ENCODE measurements at regions of chr11 and their contacts with region 1.

Region 1: GRCh38 chr11:18526521-18527296 is at the start of gene TSG101:
- DNase-seq: peak; percentile 95
- H3K4me3 Mint-ChIP-seq: peak within 1 kb of the TSS; percentile 100
- H3K27ac Mint-ChIP-seq: peak within 1 kb of the TSS; percentile 100
- H3K4me1 Mint-ChIP-seq: peaks cover 47% of the 10 kb centered on the region
- H3K27me3 Mint-ChIP-seq: no peaks in the 10 kb centered on the region
- total RNA-seq, gene TSG101: 41.7 to 45.6 TPM

Region 2: DNA sequence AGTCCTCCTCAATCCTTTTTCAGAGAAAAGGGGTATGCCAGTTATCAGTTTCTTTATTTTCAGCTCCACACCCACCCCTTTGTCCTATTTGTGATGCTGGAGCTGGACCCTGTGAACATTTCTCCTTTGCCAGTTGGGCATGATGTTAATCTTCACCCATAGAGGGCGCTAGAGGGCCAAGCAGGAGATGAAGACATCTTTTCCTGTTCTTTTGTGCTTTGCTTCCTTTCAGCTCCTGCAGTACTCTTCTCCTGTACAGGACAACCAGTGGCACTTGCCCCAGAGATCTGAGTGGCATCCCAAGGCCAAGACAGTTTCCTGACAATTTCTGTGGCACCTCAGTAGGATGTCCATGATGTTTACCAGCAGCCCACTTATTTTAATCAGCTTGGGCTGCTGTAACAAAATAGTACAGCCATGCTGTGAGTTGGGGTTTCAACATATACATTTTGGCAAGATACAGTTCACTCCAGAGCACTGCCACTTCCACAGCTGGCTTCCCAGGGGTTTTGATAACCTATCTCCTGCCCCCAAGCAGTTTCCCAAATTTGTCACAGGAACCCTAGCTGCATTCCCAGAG is 282.8 kb before region 1 on chr11:
- CTCF ChIA-PET with region 1: interaction called, 8 read pairs
- POLR2A ChIA-PET with region 1: no interaction called
- intact Hi-C with region 1: loop called (anchors 1 kb)
- DNase-seq: peak; percentile 73
- H3K4me3 Mint-ChIP-seq: no peak overlapping the region
- H3K27ac Mint-ChIP-seq: no peak overlapping the region
- H3K4me1 Mint-ChIP-seq: peaks cover 16% of the 10 kb centered on the region
- H3K27me3 Mint-ChIP-seq: peaks cover 7% of the 10 kb centered on the region

Region 3: DNA sequence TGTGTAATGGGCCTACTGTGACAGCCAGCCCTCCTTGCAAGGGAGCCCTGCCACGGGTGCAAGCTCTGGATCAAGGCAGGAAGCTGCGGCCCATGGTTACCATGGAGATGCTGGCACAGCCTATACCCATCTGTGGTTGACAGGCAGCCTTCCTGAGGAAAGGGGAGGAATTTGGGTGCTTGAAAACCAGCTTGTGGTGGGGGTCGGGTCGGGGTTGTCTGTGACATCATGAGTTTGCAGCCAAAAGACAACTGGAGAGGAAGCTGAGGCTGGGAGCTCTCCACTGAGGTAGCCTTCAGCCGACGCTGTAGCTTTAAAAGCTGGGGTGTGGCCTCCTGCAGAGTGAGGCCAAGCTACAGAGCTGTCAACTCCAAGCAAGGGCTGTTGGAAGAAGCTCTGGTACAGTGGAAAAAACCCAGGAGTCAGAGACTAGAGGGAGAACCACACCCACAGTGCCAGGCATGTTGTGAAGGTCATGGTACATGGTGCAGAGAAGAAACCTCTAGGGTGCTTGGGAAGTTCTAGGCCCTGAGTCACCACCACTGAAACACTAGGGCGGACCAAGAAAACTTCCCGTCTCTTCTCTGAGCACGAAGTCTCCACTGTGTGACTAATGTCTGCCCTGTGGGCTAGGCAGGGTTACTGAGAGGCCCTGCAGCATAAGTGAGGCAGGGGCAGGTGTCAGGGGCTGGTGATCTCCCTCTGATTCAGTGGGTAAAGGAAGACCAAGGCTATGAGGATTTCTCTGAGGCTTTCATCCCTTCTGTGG is 143.1 kb before region 1 on chr11:
- CTCF ChIA-PET with region 1: no interaction called
- POLR2A ChIA-PET with region 1: interaction called, 15 read pairs
- intact Hi-C with region 1: no loop called
- DNase-seq: peak; percentile 92
- H3K4me3 Mint-ChIP-seq: peak overlapping the region; percentile 59
- H3K27ac Mint-ChIP-seq: peak overlapping the region; percentile 99
- H3K4me1 Mint-ChIP-seq: peaks cover 43% of the 10 kb centered on the region
- H3K27me3 Mint-ChIP-seq: no peaks in the 10 kb centered on the region

Region 4: DNA sequence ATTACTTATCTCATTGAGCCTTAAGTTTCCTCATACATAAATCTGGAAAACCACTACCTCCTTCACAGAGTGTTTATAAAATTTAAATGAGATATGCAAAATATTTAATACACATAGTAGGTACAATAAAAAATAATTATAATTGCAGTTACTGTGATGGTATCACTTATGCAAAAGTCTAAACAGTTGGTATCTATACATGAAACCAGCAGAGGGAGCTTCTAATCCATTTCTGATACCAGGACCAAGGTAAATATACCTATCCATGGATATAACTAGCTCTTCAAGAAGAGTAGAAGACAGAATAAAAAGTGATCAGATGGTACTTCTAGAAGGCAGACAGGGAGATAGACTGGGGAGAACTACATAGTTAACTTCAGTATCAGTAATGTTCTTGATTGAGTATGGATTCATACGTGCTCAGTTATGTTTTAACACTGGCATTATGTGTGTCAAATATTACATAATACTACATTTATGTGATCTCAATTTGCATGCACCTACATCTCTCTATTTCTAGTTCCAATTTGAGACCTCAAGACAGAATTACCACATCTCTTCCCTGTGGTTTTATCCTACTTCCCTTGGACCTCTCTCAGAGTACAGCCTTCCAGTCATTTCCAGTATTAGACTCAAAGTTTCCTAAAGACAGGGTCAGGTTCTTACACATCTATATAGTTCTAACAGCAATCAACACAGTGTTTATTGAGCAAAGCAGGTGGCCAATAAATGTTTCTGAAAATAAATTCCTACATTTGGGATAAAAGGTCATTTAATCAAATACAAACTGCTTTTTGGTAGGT is 13.7 kb after region 1 on chr11:
- CTCF ChIA-PET with region 1: interaction called, 15 read pairs
- POLR2A ChIA-PET with region 1: no interaction called
- intact Hi-C with region 1: no loop called
- DNase-seq: no peak
- H3K4me3 Mint-ChIP-seq: no peak overlapping the region
- H3K27ac Mint-ChIP-seq: no peak overlapping the region
- H3K4me1 Mint-ChIP-seq: peaks cover 5% of the 10 kb centered on the region
- H3K27me3 Mint-ChIP-seq: no peaks in the 10 kb centered on the region

Region 5: GRCh38 chr11:18615628-18616392 is 89.1 kb after region 1 on chr11:
- CTCF ChIA-PET with region 1: no interaction called
- POLR2A ChIA-PET with region 1: interaction called, 10 read pairs
- intact Hi-C with region 1: no loop called
- DNase-seq: peak; percentile 14
- H3K4me3 Mint-ChIP-seq: peak overlapping the region; percentile 5
- H3K27ac Mint-ChIP-seq: peak overlapping the region; percentile 77
- H3K4me1 Mint-ChIP-seq: peaks cover 46% of the 10 kb centered on the region
- H3K27me3 Mint-ChIP-seq: no peaks in the 10 kb centered on the region

Region 6: GRCh38 chr11:18669220-18669598 is 142.5 kb after region 1 on chr11:
- CTCF ChIA-PET with region 1: no interaction called
- POLR2A ChIA-PET with region 1: no interaction called
- intact Hi-C with region 1: loop called (anchors 5 kb)
- DNase-seq: peak; percentile 51
- H3K4me3 Mint-ChIP-seq: peak overlapping the region; percentile 9
- H3K27ac Mint-ChIP-seq: peak overlapping the region; percentile 46
- H3K4me1 Mint-ChIP-seq: peaks cover 54% of the 10 kb centered on the region
- H3K27me3 Mint-ChIP-seq: no peaks in the 10 kb centered on the region

Region 7: DNA sequence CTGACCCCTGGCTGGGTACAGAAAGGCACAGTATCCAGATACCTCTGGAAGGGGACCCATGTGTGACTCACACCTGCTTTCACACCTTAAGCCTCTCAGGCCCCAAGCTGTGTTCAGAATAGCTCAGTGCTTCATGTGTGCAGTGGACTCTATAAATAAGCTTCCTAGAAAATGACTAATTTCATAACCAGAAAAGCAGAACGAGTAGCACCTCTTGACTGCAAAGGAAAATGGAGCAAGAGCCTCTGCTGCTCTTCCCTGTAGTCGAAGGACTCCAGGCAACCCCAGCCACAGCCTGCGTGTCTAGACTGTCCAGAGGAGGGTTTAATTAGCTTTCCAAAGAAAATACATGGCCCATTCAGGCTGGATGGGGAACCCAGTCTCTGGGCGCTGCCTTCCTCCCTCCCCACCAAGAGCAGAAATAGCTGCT is 241.8 kb after region 1 on chr11:
- CTCF ChIA-PET with region 1: interaction called, 15 read pairs
- POLR2A ChIA-PET with region 1: no interaction called
- intact Hi-C with region 1: loop called (anchors 1 kb)
- DNase-seq: peak; percentile 42
- H3K4me3 Mint-ChIP-seq: no peak overlapping the region
- H3K27ac Mint-ChIP-seq: peak overlapping the region; percentile 9
- H3K4me1 Mint-ChIP-seq: peaks cover 20% of the 10 kb centered on the region
- H3K27me3 Mint-ChIP-seq: peaks cover 12% of the 10 kb centered on the region